HCT116 (cell line): ENCODE measurements at regions of chr2 and their contacts with region 1.

Region 1: DNA sequence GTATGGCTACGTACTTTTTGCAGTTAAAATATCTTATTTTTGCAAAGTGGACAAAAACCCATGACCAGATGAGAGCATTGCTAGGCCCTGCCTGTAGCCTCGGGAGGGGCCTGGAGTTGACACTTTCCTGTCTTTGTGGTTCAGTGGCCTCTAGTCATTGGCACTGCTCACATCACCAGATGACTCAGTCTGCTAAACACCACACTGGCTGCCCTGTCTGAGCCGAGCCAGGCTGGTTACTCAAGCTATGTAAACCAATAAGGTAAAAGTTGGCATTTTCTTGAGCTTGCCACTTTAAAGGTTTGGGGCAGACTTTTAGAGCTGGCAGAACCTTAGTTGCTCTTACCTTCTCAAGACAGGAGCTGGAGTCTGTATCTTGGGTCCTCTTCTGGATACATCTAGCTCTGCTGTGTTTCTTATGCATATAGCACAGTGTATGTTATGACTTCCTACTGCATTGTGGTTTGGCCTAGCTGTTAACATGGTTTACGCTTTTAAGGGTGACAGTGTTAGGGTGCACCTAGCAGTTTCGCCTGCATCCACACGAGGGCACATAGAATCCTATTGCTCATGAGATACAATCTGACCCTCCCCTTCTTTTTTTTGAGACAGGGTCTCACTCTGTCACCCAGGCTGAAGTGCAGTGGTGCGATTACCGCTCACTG is 76.4 kb downstream of the AP1S3 start:
- DNase-seq: peak; percentile 96
- ATAC-seq: peak; percentile 90
- H3K4me3 ChIP-seq: 0 out of 4 replicates have a peak overlapping the region, but pooled peaks of 1 of the 2 experiments have one; percentile 23
- H3K27ac ChIP-seq: peak overlapping the region; percentile 91
- H3K4me1 ChIP-seq: peaks cover 56 to 63% of the 10 kb centered on the region in 2 experiments
- H3K27me3 ChIP-seq: no peaks in the 10 kb centered on the region
- CTCF ChIP-seq: peak in 2 of 3 experiments; percentile 56 to 59; a peak in 4 of 6 replicates
- POLR2A ChIP-seq: no peak
- RAD21 ChIP-seq: peak; percentile 49

Region 2: DNA sequence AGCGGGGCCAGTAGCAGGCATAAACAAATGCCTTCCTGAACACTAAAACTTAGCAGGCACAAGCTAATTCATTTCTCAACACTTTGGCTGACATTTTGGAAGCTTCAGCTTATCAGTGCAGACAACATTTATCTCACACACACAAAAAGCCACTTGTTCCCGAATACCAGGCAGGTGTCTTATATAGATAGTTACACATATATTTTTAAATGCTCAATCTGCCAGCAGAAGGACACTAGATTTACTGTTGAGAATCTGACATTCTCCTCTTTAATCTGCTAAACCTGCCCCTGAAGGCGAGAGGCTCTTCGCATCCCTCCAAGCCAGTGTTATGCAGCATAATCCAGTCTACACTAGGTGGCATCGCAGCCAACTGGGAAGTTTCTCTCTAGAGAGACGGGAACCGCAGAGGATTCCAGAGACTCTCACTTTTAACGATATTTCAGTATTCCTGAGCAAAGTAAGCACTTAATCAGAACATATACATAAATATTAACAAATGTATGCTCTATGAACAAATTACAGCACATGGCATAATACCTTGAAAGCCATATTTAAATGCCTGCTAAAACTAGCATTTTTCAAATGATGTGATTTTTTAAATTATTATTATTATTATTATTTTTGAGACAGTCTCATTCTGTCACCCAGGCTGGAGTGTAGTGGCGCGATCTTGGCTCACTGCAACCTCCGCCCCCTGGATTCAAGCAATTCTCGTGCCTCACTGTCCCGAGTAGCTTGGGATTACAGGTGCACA is 68.6 kb before region 1 on chr2:
- CTCF ChIA-PET with region 1: no interaction called
- POLR2A ChIA-PET with region 1: interaction called, 30 read pairs
- RAD21 ChIA-PET with region 1: no interaction called
- intact Hi-C with region 1: no loop called
- DNase-seq: peak; percentile 59
- ATAC-seq: peak; percentile 85
- H3K4me3 ChIP-seq: no peak overlapping the region
- H3K27ac ChIP-seq: peak overlapping the region; percentile 4; the same call in 1 of the 2 replicates
- H3K4me1 ChIP-seq: peaks cover 34 to 51% of the 10 kb centered on the region in 2 experiments
- H3K27me3 ChIP-seq: no peaks in the 10 kb centered on the region
- CTCF ChIP-seq: peak; percentile 71 to 77 (median 72)
- POLR2A ChIP-seq: no peak
- RAD21 ChIP-seq: peak; percentile 86